ENCODE measurements at regions of chr15 and their contacts with region 1.

Region 1: DNA sequence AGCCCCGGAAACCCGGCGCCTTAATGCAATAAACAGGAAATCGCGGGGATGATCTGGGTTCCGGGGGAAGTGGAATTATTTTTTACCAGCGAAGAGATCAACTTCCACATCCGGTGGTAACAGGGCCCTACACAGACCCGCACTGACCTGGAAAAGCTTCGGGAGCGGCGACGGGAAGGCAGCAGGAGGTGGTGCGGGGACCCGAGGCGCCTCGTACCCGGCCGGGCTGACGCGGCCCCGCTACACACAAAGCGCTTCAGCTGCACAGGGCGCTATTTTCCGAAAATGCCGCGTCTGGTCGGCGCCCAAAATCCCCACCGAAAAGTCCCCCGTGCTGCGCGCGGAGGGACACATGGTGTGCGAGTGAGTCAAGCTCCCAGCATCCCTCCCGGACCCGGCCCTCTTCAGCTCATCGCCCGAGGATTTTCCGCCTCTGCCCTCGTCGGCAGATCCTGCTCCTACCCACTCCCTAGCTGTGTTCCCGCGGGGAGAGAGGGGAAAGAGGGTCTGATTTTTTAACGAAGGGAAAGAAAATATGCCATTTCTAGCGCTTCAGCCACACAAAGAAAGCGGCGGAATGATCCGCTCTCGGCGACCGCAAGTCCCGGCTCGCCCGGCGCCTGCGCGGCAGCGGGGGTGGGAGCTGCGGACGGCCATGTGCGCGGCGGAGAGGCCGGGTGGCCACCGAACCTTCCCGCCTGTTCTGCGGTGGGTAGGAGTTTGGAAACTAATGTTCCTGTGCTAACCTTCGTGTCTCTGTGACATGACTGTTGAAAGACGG is at the start of gene GABPB1:
- DNase-seq: peak; percentile 94
- ATAC-seq: peak; percentile 42
- H3K4me3 Mint-ChIP-seq: peak within 1 kb of the TSS; percentile 99
- H3K27ac Mint-ChIP-seq: peak within 1 kb of the TSS; percentile 100
- H3K4me1 Mint-ChIP-seq: peaks cover 44% of the 10 kb centered on the region
- H3K27me3 Mint-ChIP-seq: no peaks in the 10 kb centered on the region
- total RNA-seq, gene GABPB1: 46.3 to 53.4 TPM

Region 2: GRCh38 chr15:49046220-49047102 is 1308.6 kb before region 1 on chr15 and contains the start of gene SECISBP2L:
- CTCF ChIA-PET with region 1: no interaction called
- POLR2A ChIA-PET with region 1: no interaction called
- intact Hi-C with region 1: loop called in 1 of 2 experiments (anchors 5 kb)
- DNase-seq: peak; percentile 95
- ATAC-seq: peak; percentile 97
- H3K4me3 Mint-ChIP-seq: peak within 1 kb of the TSS; percentile 92
- H3K27ac Mint-ChIP-seq: peak within 1 kb of the TSS; percentile 84
- H3K4me1 Mint-ChIP-seq: peaks cover 22% of the 10 kb centered on the region
- H3K27me3 Mint-ChIP-seq: no peaks in the 10 kb centered on the region
- total RNA-seq, gene SECISBP2L: 22.4 to 36.8 TPM

Region 3: DNA sequence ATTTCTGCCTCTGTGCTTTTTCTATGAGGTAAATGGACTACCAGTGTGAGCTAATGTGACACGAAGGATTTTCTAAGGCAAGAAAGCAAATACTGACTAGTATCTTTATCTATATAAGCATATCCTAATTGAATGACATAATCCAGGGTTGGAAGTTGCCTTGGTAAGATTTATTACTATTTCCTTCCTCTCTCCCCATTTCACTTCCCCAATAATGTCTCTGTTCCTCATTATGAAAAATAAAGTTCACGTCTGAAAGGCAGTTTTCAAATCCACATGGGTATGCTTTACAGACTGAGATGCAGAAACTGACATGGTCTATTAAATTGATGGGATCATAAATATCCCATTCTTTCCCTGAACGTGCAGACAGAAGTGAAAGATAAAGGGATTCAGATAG is 648.2 kb before region 1 on chr15:
- CTCF ChIA-PET with region 1: no interaction called
- POLR2A ChIA-PET with region 1: no interaction called
- intact Hi-C with region 1: no loop called
- DNase-seq: no peak
- ATAC-seq: no peak
- H3K4me3 Mint-ChIP-seq: no peak overlapping the region
- H3K27ac Mint-ChIP-seq: no peak overlapping the region
- H3K4me1 Mint-ChIP-seq: no peaks in the 10 kb centered on the region
- H3K27me3 Mint-ChIP-seq: no peaks in the 10 kb centered on the region

Region 4: DNA sequence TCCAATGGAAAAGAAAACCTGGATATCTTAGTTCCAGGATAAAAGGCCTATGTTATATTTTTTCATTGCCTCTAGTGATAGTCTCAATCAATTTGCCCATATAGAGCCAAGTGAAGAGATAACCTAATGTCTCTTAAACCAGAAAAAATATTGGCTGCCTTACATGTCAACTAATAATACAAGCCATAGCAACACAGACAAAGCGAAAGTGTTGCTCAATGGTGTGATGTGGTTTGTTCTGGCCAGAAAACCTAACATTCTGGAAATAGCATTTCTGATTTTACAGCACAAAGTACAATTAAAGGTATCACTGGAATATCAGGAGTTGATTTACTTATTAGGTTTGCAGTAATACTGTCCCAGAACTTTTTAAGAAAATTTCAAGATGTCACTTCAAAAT is 337.5 kb before region 1 on chr15:
- CTCF ChIA-PET with region 1: no interaction called
- POLR2A ChIA-PET with region 1: no interaction called
- intact Hi-C with region 1: no loop called
- DNase-seq: no peak
- ATAC-seq: no peak
- H3K4me3 Mint-ChIP-seq: no peak overlapping the region
- H3K27ac Mint-ChIP-seq: no peak overlapping the region
- H3K4me1 Mint-ChIP-seq: no peaks in the 10 kb centered on the region
- H3K27me3 Mint-ChIP-seq: peaks cover 4% of the 10 kb centered on the region

Region 5: DNA sequence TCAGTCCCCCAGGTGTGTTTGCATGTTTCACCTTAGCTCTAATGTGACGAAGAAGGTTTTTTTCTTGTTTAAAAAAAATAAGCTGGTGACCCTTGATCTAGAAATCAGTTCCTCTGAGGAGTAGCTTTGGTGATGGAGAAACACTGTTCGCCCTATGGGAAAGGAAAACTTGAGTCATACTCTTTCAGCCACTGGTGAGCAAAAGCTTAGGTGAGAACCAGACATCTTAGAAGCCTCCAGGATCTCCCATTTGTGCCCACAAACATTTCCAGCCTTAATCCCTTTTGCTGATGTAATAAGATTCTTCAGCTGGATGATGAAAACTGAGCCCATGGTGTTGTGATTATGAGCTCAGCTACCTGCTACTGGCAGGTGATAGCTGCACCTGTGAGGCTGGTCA is 135.2 kb before region 1 on chr15:
- CTCF ChIA-PET with region 1: no interaction called
- POLR2A ChIA-PET with region 1: no interaction called
- intact Hi-C with region 1: no loop called
- DNase-seq: no peak
- ATAC-seq: peak; percentile 70
- H3K4me3 Mint-ChIP-seq: no peak overlapping the region
- H3K27ac Mint-ChIP-seq: peak overlapping the region; percentile 10
- H3K4me1 Mint-ChIP-seq: peaks cover 14% of the 10 kb centered on the region
- H3K27me3 Mint-ChIP-seq: peaks cover 2% of the 10 kb centered on the region

Region 6: DNA sequence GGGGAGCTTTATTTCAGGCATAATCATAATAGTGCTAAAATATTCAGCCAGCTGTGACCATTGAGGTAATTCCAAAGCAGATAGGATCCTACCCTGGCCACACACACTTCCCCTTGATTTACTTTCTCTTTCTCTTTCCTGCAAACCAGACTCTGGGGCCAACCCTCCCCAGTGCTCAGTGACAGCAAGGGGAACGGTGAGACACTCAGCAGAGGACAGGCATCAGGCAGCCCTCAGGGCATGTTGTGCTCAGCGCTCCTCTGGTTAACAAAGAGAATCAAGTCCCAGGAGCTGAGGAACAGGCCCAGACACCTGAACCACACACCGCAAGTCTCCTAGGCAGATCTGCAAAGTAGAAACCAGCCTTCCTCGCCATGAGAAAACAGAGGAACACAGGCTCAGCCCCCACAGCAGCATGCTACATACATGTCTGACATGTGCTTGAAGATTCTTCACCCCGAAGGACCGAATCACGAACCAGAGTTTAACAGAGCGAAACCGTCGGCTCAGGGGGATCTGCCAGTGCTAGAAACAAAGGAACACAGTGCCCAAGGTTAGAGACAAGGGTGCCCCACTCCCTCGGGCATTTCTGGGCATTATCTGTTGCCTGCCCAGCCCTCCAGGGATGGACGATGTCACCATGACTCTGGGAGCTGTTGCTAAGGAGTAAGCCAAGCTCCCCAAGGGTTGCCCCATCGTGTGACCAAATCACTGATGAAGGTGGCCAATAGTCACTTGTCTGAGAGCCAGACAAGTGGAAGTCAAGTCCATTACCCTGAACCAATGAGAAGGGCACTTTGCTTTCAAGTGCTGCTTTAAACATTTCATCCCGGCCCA is 107.0 kb before region 1 on chr15:
- CTCF ChIA-PET with region 1: no interaction called
- POLR2A ChIA-PET with region 1: interaction called, 3 read pairs
- intact Hi-C with region 1: loop called in 1 of 2 experiments (anchors 1 kb)
- DNase-seq: peak; percentile 83
- ATAC-seq: peak; percentile 99
- H3K4me3 Mint-ChIP-seq: peak overlapping the region; percentile 67
- H3K27ac Mint-ChIP-seq: peak overlapping the region; percentile 96
- H3K4me1 Mint-ChIP-seq: peaks cover 33% of the 10 kb centered on the region
- H3K27me3 Mint-ChIP-seq: no peaks in the 10 kb centered on the region

Region 7: DNA sequence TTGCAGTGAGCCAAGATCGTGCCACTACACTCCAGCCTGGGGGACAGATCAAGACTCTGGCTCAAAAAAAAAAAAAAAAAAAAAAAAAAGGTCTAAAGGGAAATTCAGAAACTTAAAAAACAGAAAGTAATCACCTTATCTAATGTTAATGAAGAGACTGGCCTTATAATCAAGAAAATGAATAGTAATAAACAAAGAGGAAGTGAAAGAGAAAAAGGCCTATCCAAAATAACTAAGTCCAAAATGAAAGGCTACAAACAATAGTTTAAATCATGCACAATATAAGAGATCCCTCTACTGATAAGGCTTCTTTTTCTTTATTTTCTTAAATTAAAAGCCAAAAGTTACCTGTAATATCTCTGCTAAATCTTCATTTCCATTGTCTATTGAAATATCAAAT is 52.4 kb before region 1 on chr15:
- CTCF ChIA-PET with region 1: no interaction called
- POLR2A ChIA-PET with region 1: no interaction called
- intact Hi-C with region 1: no loop called
- DNase-seq: no peak
- ATAC-seq: no peak
- H3K4me3 Mint-ChIP-seq: no peak overlapping the region
- H3K27ac Mint-ChIP-seq: no peak overlapping the region
- H3K4me1 Mint-ChIP-seq: no peaks in the 10 kb centered on the region
- H3K27me3 Mint-ChIP-seq: no peaks in the 10 kb centered on the region

Region 8: GRCh38 chr15:50424066-50424890 is 69.2 kb after region 1 on chr15 and contains the start of gene USP8:
- CTCF ChIA-PET with region 1: interaction called, 4 read pairs
- POLR2A ChIA-PET with region 1: interaction called, 19 read pairs
- intact Hi-C with region 1: loop called (anchors 1 kb)
- DNase-seq: peak; percentile 97
- ATAC-seq: peak; percentile 98
- H3K4me3 Mint-ChIP-seq: peak within 1 kb of the TSS; percentile 88
- H3K27ac Mint-ChIP-seq: peak within 1 kb of the TSS; percentile 92
- H3K4me1 Mint-ChIP-seq: peaks cover 32% of the 10 kb centered on the region
- H3K27me3 Mint-ChIP-seq: no peaks in the 10 kb centered on the region
- total RNA-seq, gene USP8: 39.8 to 45.3 TPM

Region 9: DNA sequence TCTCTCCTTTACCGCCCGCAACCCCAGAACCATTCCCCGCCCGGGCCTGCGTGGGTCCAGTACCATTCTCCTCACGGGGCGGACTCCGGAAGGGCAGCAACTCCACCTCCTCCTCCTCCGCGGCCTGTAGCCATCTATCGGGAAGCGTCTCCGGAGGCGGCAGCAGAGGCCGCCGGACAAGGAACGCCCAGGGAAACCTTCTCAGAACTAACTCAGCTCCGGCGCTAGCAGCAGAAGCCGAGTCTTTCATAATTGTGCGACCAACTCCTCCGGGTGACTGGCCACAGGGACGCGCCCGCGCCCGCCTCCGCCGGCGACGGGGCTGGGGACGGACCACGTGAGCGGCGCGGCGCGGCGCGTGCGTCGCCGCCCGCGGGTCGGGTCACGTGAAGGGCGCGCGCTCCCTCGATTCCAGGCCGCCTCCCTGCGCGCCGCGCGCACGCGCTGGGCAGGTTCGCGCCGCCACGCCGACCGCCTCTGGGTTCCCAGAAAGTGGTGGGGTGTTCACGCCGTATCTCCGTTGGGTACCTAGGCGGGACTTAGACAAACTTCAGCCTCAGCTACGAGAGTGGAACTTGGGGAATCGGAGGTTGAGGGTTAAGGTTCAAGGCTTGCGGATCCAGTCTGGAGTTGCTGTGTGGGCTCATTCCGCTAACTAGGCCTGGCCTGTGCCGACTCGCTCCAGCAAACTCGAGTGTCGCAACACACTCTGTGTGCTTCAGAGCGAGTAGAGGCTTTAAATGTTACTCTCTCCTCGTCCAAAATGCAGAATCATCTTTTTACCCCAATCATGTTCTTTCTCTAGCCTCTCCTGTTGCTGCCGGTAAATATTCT is 331.7 kb after region 1 on chr15 and contains the start of gene TRPM7:
- CTCF ChIA-PET with region 1: no interaction called
- POLR2A ChIA-PET with region 1: no interaction called
- intact Hi-C with region 1: loop called (anchors 1 to 2 kb)
- DNase-seq: peak; percentile 95
- ATAC-seq: peak; percentile 79
- H3K4me3 Mint-ChIP-seq: peak within 1 kb of the TSS; percentile 99
- H3K27ac Mint-ChIP-seq: peak within 1 kb of the TSS; percentile 97
- H3K4me1 Mint-ChIP-seq: peaks cover 49% of the 10 kb centered on the region
- H3K27me3 Mint-ChIP-seq: no peaks in the 10 kb centered on the region
- total RNA-seq, gene TRPM7: 40.7 to 41.4 TPM

Region 10: DNA sequence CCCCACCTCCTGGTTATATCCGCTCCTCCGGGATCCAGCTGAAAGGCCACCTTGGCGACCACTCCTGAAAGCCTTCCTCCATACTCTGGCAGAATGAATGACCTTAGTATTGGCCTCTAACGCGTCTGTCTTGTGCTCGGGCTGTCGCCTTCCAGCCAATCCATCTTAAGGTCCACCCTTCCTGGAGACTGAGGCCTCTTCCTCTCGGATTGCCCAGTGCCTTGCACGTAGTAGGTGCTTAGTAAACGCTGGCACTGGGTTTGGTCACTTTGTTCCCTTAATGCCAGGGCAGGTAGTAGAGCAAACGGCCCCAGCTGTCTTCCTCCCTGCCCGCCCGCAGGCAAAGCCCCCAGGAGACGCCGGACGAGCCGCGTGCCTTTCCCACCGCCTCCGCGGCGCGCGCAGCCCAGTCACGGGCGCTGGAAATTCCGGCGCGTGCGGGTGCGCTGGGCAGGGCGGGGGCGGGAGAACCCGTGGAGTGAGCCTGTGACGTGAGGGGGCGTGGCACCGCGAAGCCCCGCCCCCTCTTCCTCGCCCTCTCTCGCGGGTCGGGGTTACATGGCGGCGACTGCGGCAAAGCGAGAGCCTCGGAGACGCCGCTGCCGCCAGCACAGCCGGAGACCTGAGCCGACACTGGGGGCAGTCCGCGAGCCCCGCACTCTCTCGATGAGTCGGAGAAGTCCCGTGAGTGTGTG is 1663.8 kb after region 1 on chr15 and contains the start of gene MAPK6:
- CTCF ChIA-PET with region 1: no interaction called
- POLR2A ChIA-PET with region 1: no interaction called
- intact Hi-C with region 1: loop called in 1 of 2 experiments (anchors 5 kb)
- DNase-seq: peak; percentile 97
- ATAC-seq: peak; percentile 76
- H3K4me3 Mint-ChIP-seq: peak within 1 kb of the TSS; percentile 86
- H3K27ac Mint-ChIP-seq: peak within 1 kb of the TSS; percentile 96
- H3K4me1 Mint-ChIP-seq: peaks cover 38% of the 10 kb centered on the region
- H3K27me3 Mint-ChIP-seq: peaks cover 5% of the 10 kb centered on the region
- total RNA-seq, gene MAPK6: 27.3 to 28.1 TPM

Measured in activated CD4-positive, alpha-beta T cell treated with anti-CD3 and anti-CD28 coated beads for 36 hours (primary cell).